ENCODE measurements at regions of chr1 and their contacts with region 1.

Region 1: DNA sequence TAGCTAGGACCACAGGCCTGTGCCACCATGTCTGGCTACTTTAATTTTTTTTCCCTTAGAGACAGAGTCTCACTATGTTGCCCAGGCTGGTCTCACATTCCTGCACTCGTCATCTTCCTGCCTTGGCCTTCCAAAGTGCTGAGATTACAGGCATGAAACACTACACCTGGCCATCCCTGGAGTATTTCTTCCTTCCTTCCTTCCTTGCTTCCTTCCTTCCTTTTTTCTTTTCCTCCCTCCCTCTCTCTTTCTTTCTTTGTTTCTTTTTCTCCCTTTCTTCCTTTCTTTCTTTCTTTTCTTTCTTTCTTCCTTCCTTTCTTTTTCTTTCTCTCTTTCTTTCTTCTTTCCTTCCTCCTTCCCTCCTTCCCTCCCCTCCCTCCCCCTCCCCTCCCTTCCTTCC is 46.4 kb upstream of the PM20D1 start:
- DNase-seq: no peak
- ATAC-seq: no peak
- H3K4me3 ChIP-seq: no peak overlapping the region
- H3K27ac ChIP-seq: no peak overlapping the region
- H3K4me1 ChIP-seq: no peaks in the 10 kb centered on the region
- H3K27me3 ChIP-seq: peaks cover 0 to 9% (median 0%) of the 10 kb centered on the region in 7 donors
- CTCF ChIP-seq: no peak

Region 2: GRCh38 chr1:205805082-205805712 is 91.1 kb before region 1 on chr1:
- intact Hi-C with region 1: loop called in 1 of 10 experiments (anchors 5 kb)
- DNase-seq: no peak
- ATAC-seq: no peak
- H3K4me3 ChIP-seq: peak overlapping the region in 6 of 10 donors; percentile 0 to 77 (median 18)
- H3K27ac ChIP-seq: peak overlapping the region in 1 of 10 donors; percentile 25
- H3K4me1 ChIP-seq: peaks cover 3 to 98% (median 63%) of the 10 kb centered on the region in 9 donors
- H3K27me3 ChIP-seq: no peaks in the 10 kb centered on the region
- CTCF ChIP-seq: no peak

Measured in heart right ventricle (tissue), 16 donors.